Pancreas (tissue), 10 donors: ENCODE measurements at regions of chr11 and their contacts with region 1.

Region 1: GRCh38 chr11:124961972-124962609 is 8.1 kb downstream of the CCDC15 start:
- DNase-seq: no peak
- ATAC-seq: peak; percentile 73 to 94 (median 92)
- H3K4me3 ChIP-seq: no peak overlapping the region
- H3K27ac ChIP-seq: no peak overlapping the region
- H3K4me1 ChIP-seq: no peaks in the 10 kb centered on the region
- H3K27me3 ChIP-seq: no peaks in the 10 kb centered on the region
- CTCF ChIP-seq: peak; percentile 19 to 55 (median 46)

Region 2: GRCh38 chr11:125141686-125142535 is 179.8 kb after region 1 on chr11:
- intact Hi-C with region 1: loop called in 2 of 3 experiments (anchors 5 to 10 kb)
- DNase-seq: peak in 3 of 6 donors; percentile 36 to 83 (median 44)
- ATAC-seq: peak; percentile 55 to 93 (median 89)
- H3K4me3 ChIP-seq: no peak overlapping the region
- H3K27ac ChIP-seq: no peak overlapping the region
- H3K4me1 ChIP-seq: no peaks in the 10 kb centered on the region
- H3K27me3 ChIP-seq: peaks cover 0 to 6% (median 0%) of the 10 kb centered on the region in 4 donors
- CTCF ChIP-seq: peak; percentile 93 to 95 (median 94)